ENCODE measurements at regions of chr2 and their contacts with region 1.

Region 1: DNA sequence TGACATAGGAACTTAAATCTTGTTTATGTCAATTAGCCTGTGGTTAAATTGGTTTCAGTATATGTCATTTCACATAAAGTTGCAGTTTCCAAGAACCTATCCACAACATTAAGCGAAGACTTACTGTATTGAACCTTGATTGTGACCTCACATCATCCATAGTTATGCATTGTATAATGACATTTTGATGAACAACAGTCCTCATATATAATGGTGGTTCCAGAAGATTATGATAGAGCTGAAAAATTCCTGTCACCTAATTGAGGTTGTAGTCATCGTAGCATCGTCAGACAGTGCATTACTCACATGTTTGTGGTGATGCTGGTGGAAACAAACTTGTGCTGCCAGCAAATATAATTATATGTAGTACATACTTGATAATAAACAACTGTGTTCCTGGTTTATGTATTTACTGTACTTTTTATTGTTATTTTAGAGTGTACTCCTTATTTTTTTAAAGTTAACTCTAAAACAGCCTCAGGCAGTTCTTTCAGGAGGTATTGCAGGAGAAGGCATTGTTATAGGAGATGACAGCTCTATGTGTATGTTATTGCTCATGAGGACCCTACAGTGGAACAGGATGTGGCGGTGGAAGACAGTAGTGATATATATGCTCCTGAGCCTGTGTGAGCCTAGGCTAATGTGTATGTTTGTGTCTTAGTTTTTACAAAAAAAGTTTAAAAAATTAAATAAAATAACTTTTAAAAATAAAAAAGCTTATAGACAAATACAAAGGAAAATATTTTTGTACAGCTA is 56.6 kb downstream of the UBE2E3 start:
- DNase-seq: no peak
- H3K4me3 ChIP-seq: no peak overlapping the region
- H3K27ac ChIP-seq: no peak overlapping the region
- H3K4me1 ChIP-seq: peaks cover 4% of the 10 kb centered on the region
- H3K27me3 ChIP-seq: no peaks in the 10 kb centered on the region
- CTCF ChIP-seq: no peak
- POLR2A ChIP-seq: no peak

Region 2: DNA sequence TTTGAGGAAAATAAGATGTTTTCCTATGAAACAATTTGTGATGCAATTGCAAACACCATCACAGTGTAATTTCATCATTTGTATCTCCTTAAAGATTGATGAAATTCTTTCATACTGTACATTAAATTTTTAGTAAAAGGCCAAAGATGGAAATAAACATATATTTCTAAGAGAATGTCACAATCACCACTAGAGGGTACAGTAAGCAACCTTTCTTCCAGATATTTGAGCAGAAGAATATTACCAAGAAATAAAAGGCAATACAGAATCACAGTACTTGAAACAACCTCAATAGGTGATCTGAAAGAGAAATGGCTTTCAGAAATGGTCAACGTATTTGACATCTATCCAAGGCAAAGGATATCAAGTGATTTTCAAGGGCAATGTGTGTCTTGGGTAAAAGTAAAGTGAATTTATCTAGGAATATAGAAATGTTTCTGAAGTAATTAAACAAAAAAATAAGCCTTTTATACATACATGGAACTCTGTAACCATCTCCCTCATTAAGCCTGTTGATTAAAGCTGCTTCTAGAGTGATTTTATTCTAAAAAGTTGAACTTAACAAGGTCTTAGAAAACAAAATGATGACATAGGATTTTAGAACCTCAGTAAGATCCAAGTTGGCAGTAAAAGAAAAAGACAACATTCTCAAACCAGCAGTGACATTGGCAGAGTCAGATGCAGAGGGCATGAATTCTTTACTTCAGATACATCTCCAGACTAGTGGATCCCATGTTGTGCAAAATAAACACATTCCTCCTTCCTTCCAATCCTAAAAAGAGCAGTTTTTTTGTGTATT is 1682.1 kb before region 1 on chr2:
- intact Hi-C with region 1: loop called (anchors 5 kb)
- DNase-seq: no peak
- H3K4me3 ChIP-seq: no peak overlapping the region
- H3K27ac ChIP-seq: no peak overlapping the region
- H3K4me1 ChIP-seq: no peaks in the 10 kb centered on the region
- H3K27me3 ChIP-seq: no peaks in the 10 kb centered on the region
- CTCF ChIP-seq: no peak
- POLR2A ChIP-seq: no peak